Activated T-helper 1 cell treated with anti-CD3 and anti-CD28 coated beads, Interleukin-12 subunit alpha, Interleukin-12 subunit beta, Interleukin-2, Interleukin-4 antibody, amounts not matched to agents 30 ng/mL and 10 ng/mL and 1 ng/mL, durations not matched to agents 14 hours and 24 hours and 36 hours (primary cell): ENCODE measurements at regions of chr15 and their contacts with region 1.

Region 1: DNA sequence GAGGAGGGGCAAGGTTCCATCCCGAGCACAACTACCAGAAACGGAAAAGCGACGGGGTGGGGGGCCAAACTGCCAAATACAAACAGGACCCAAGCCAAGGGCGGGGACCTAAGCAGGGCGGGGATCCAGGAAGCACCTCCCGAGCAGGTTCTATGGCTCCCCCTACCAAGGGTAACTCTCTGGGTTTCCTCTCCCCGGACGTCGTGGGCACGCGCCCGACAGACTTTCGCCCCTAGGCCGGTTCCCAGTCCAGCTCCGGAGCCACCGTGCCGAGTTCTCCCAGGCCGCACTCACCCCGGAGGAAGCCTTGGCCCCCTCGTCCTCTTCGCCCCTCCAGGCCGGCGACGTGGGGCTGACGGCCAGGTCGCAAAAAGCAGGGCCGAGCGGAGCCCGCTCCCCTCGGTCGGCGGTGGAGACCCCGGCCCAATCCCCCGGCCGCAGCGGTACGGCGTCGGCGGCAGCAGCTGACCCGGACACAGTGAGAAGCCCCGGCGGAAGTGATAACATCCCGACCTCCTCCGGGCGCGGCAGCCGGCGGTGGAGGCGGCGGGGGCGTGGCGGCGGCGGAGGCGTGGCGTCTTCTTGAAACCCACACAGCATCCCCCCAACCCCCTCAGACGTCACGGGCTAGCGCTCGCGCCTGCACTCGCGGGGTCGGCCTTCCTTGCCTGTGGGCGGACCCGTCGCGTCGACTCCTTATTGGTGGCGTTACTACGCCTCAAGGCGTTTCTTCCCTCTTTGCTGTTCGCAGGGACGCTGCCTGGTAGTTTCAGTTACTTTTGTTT is at the start of gene BNIP2:
- DNase-seq: peak; percentile 99
- H3K4me3 Mint-ChIP-seq: peak within 1 kb of the TSS; percentile 90
- H3K27ac Mint-ChIP-seq: peak within 1 kb of the TSS; percentile 91
- H3K4me1 Mint-ChIP-seq: peaks cover 41% of the 10 kb centered on the region
- H3K27me3 Mint-ChIP-seq: no peaks in the 10 kb centered on the region
- total RNA-seq, gene BNIP2: 63.5 and 64.6 TPM in 2 replicates

Region 2: GRCh38 chr15:58933281-58934113 is 755.5 kb before region 1 on chr15 and contains the start of gene SLTM:
- intact Hi-C with region 1: loop called (anchors 2 kb)
- DNase-seq: peak; percentile 88
- H3K4me3 Mint-ChIP-seq: peak within 1 kb of the TSS; percentile 98
- H3K27ac Mint-ChIP-seq: peak within 1 kb of the TSS; percentile 100
- H3K4me1 Mint-ChIP-seq: peaks cover 34% of the 10 kb centered on the region
- H3K27me3 Mint-ChIP-seq: no peaks in the 10 kb centered on the region
- total RNA-seq, gene SLTM: 142 and 143 TPM in 2 replicates

Region 3: GRCh38 chr15:59528965-59529402 is 160.0 kb before region 1 on chr15:
- intact Hi-C with region 1: loop called (anchors 5 kb)
- DNase-seq: peak; percentile 56
- H3K4me3 Mint-ChIP-seq: no peak overlapping the region
- H3K27ac Mint-ChIP-seq: no peak overlapping the region
- H3K4me1 Mint-ChIP-seq: peaks cover 21% of the 10 kb centered on the region
- H3K27me3 Mint-ChIP-seq: peaks cover 7% of the 10 kb centered on the region

Region 4: DNA sequence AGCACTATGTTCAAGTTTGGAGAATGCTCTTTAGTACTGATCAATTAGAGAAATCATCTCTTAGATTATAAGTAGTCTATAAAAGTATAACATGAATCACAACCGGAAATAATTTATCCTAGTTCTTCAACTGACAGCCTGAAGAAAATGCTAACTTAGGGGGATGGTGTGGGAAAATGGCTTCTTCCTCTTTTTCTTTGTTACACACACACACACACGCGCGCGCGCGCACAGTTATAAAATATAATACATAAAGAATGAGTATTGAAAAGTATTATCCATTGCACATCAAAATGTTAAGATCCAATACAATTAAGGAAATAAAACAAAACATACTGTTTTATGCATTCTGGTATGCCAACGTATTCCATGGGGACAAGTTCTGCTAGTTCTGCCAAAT is 20.5 kb before region 1 on chr15:
- intact Hi-C with region 1: no loop called
- DNase-seq: no peak
- H3K4me3 Mint-ChIP-seq: no peak overlapping the region
- H3K27ac Mint-ChIP-seq: no peak overlapping the region
- H3K4me1 Mint-ChIP-seq: no peaks in the 10 kb centered on the region
- H3K27me3 Mint-ChIP-seq: no peaks in the 10 kb centered on the region

Region 5: GRCh38 chr15:60128000-60128376 is 439.0 kb after region 1 on chr15:
- intact Hi-C with region 1: loop called (anchors 5 kb)
- DNase-seq: no peak
- H3K4me3 Mint-ChIP-seq: peak overlapping the region; percentile 82
- H3K27ac Mint-ChIP-seq: peak overlapping the region; percentile 80
- H3K4me1 Mint-ChIP-seq: peaks cover 57% of the 10 kb centered on the region
- H3K27me3 Mint-ChIP-seq: peaks cover 11% of the 10 kb centered on the region

Region 6: DNA sequence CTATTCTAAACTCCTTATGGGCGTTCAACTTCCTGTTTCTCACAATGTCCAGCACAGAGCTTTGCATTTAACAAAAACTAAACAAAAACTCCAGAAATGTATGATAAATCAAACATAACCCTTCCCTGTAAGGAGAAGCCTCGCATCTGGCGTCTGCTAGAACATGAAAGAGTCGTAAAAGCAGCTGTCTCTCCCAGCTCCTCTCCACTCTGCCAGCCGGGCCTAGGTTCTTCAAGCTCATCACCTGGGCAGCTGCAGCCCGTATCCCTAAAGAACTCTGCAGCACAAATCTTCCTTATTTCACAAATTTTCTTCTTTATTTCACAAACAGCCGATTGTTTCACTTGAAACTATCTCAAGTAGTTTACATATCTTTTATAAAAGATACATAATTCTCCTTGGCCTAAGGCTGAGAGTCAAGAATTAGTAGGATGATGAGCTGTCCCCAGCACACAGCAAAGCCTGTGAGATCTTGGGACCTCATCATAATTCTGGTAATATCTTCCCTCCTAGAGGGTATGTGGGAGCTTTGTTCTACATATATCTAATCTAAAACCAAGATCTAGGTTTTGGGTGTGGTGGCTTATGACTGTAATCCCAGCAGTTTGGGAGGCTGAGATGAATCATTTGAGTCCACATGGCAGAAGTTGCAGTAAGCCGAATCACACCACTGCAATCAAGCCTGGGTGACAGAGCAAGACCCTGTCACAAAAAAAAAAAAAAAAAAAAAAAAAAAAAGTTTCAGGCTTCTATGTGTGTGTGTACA is 673.5 kb after region 1 on chr15:
- intact Hi-C with region 1: loop called (anchors 1 kb)
- DNase-seq: peak; percentile 49
- H3K4me3 Mint-ChIP-seq: peak overlapping the region; percentile 13
- H3K27ac Mint-ChIP-seq: peak overlapping the region; percentile 82
- H3K4me1 Mint-ChIP-seq: peaks cover 36% of the 10 kb centered on the region
- H3K27me3 Mint-ChIP-seq: no peaks in the 10 kb centered on the region